ENCODE measurements at regions of chr12 and their contacts with region 1.

Region 1: GRCh38 chr12:389139-390096 is at the start of gene KDM5A:
- DNase-seq: peak; percentile 94
- ATAC-seq: peak; percentile 94
- H3K4me3 Mint-ChIP-seq: peak within 1 kb of the TSS; percentile 89
- H3K27ac Mint-ChIP-seq: peak within 1 kb of the TSS; percentile 96
- H3K4me1 Mint-ChIP-seq: peaks cover 26% of the 10 kb centered on the region
- H3K27me3 Mint-ChIP-seq: no peaks in the 10 kb centered on the region
- total RNA-seq, gene KDM5A: 40.3 to 58.7 TPM

Region 2: DNA sequence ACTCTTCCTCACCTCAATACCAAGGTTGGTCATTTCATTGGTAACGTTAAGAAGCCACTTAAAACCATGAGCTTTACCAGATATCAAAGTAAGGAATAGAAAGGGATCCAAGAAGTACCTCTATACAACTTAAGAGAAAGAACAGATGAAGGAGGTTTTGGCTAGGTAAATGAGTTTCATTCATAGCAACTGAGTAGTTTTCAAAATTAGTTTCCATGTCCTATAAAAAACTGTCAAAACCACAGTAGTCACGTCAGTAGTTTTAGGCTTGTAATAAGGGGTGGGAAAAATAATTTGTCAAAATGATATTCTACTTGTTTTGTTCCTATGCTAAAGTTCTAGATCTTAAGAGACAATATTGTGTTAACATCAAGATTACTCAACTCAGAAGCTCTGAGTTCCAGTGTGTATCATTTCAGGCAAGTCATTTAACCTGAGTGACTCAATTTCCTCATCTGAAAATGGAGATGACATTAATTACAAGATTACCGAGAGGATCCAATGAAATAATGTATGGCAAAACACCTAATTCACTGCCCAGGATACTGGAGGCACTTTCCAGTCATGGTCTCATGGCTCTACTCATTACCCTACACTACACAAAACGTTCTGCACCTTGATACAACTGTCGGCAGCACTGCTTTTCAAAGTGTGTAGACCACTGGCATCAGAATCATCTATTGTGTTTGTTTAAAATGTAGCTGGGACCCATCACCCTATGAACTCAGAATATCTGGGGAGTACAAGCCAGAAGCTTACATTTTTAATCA is 102.7 kb before region 1 on chr12:
- CTCF ChIA-PET with region 1: no interaction called
- POLR2A ChIA-PET with region 1: no interaction called
- intact Hi-C with region 1: loop called in 1 of 2 experiments (anchors 2 kb)
- DNase-seq: peak; percentile 10
- ATAC-seq: peak; percentile 85
- H3K4me3 Mint-ChIP-seq: peak overlapping the region; percentile 30
- H3K27ac Mint-ChIP-seq: peak overlapping the region; percentile 90
- H3K4me1 Mint-ChIP-seq: peaks cover 47% of the 10 kb centered on the region
- H3K27me3 Mint-ChIP-seq: no peaks in the 10 kb centered on the region

Region 3: DNA sequence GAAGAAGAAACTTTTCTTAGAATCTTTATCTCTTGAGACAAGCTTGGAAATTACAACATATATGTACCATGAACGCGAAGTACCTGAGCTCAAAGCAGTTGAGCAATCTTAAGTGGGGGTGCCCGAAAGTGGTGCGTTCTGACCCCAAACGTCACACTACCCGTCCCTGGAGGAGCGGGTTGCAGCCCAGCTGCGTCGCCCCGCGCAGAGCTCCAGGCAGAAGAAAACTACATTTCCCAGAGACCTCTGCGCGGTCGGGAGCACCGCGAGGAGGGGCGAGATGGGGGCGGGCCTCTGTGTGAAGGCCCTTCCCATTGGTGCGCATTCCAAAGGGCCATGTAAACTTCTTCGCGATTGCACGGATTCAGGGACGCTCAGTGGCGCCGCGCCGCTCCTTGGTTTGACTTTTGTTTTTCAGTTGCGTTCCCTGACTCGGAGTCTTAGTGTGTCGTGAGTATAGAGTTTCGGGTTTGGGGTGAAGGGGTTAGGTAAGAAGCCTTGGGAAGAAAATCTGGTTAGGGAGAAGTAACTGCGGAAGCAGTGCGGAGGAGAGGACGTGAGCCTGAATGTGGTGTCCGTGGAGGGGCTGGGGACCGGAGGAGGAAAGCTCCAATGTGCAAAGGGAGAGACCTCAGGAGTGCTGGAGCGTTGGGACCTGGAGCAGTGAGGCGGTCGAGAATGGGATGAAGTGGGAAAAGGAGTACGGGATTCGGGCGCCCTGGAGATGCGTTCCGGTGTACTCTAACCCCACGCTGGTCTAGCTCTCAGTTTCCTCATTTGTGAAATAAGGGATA is 12.0 kb after region 1 on chr12 and contains the start of gene CCDC77:
- CTCF ChIA-PET with region 1: interaction called, 28 read pairs
- POLR2A ChIA-PET with region 1: interaction called, 23 read pairs
- intact Hi-C with region 1: loop called (anchors 1 kb)
- DNase-seq: peak; percentile 96
- ATAC-seq: peak; percentile 100
- H3K4me3 Mint-ChIP-seq: no peak within 1 kb of the TSS
- H3K27ac Mint-ChIP-seq: no peak within 1 kb of the TSS
- H3K4me1 Mint-ChIP-seq: peaks cover 5% of the 10 kb centered on the region
- H3K27me3 Mint-ChIP-seq: no peaks in the 10 kb centered on the region
- total RNA-seq, gene CCDC77: 17.3 to 18.7 TPM

Region 4: GRCh38 chr12:712172-712863 is 322.9 kb after region 1 on chr12:
- CTCF ChIA-PET with region 1: no interaction called
- POLR2A ChIA-PET with region 1: no interaction called
- intact Hi-C with region 1: no loop called
- DNase-seq: no peak
- ATAC-seq: no peak
- H3K4me3 Mint-ChIP-seq: no peak overlapping the region
- H3K27ac Mint-ChIP-seq: peak overlapping the region; percentile 49
- H3K4me1 Mint-ChIP-seq: peaks cover 40% of the 10 kb centered on the region
- H3K27me3 Mint-ChIP-seq: no peaks in the 10 kb centered on the region

Measured in activated CD4-positive, alpha-beta T cell treated with anti-CD3 and anti-CD28 coated beads for 36 hours (primary cell).